ENCODE measurements at regions of chr15 and their contacts with region 1.

Region 1: GRCh38 chr15:59492389-59493377 is 54.7 kb downstream of the FAM81A start:
- DNase-seq: peak; percentile 12 to 63 (median 49)
- ATAC-seq: peak; percentile 85
- H3K4me3 ChIP-seq: no peak overlapping the region
- H3K4me3 Mint-ChIP-seq: peak overlapping the region in 1 of 10 donors; percentile 26
- H3K27ac ChIP-seq: no peak overlapping the region
- H3K27ac Mint-ChIP-seq: peak overlapping the region in 1 of 9 donors; percentile 2
- H3K4me1 ChIP-seq: no peaks in the 10 kb centered on the region
- H3K4me1 Mint-ChIP-seq: peaks cover 0 to 5% (median 4%) of the 10 kb centered on the region in 7 donors
- H3K27me3 ChIP-seq: no peaks in the 10 kb centered on the region
- H3K27me3 Mint-ChIP-seq: peaks cover 0 to 28% (median 3%) of the 10 kb centered on the region in 5 donors

Region 2: GRCh38 chr15:58269455-58270414 is 1222.9 kb before region 1 on chr15:
- CTCF ChIA-PET with region 1: interaction called, 4 read pairs
- POLR2A ChIA-PET with region 1: no interaction called
- intact Hi-C with region 1: loop called in 1 of 2 experiments (anchors 1 kb)
- DNase-seq: peak in 7 of 9 donors; percentile 13 to 56 (median 37)
- ATAC-seq: peak; percentile 81
- H3K4me3 ChIP-seq: no peak overlapping the region
- H3K4me3 Mint-ChIP-seq: no peak overlapping the region
- H3K27ac ChIP-seq: no peak overlapping the region
- H3K27ac Mint-ChIP-seq: peak overlapping the region in 5 of 9 donors; percentile 10 to 78 (median 52)
- H3K4me1 ChIP-seq: peaks cover 0 to 5% of the 10 kb centered on the region in 2 donors
- H3K4me1 Mint-ChIP-seq: peaks cover 6 to 14% (median 13%) of the 10 kb centered on the region in 7 donors
- H3K27me3 ChIP-seq: no peaks in the 10 kb centered on the region
- H3K27me3 Mint-ChIP-seq: peaks cover 0 to 6% (median 0%) of the 10 kb centered on the region in 5 donors

Region 3: DNA sequence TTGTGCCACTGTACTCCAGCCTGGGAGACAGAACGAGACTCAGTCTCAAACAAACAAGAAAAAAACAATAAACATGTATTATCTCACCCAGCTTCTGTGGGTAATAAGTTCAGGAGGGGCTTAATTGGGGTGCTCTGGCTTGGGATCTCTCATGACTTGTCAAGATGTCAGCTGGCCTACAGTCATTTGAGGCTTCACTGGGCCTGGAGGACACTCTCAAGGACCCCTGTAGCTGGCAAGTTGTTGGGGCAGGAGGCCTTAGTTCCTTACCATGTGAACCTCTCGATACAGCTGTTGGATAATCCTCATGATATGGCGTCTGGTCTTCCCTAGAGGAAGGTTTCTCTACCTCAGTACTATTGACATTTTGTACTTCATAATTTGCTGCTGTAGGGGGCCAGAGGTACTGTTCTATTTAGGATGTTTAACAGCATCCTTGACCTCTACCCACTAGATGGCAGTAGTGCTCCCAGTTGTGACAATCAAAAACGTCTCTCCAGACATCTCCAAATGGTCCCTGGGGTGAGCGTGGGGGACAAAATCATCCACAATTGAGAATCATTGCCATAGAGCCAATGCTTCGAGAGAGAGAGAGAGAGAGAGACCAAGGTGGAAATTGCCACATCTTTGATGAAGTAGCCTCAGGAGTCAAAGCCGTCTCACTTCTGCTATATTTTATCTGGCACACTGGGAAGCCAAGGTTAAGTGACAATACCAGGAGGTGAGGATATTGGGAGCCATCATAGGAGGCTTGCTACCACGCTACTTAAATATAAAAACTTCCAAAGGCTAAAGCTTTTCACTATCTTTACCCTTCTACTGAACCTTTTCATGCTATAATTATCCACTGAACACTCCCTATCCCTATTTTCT is 535.3 kb before region 1 on chr15:
- CTCF ChIA-PET with region 1: interaction called, 4 read pairs
- POLR2A ChIA-PET with region 1: no interaction called
- intact Hi-C with region 1: loop called (anchors 1 kb)
- DNase-seq: peak in 8 of 9 donors; percentile 37 to 69 (median 63)
- ATAC-seq: peak; percentile 99
- H3K4me3 ChIP-seq: no peak overlapping the region
- H3K4me3 Mint-ChIP-seq: peak overlapping the region in 1 of 10 donors; percentile 39
- H3K27ac ChIP-seq: no peak overlapping the region
- H3K27ac Mint-ChIP-seq: no peak overlapping the region
- H3K4me1 ChIP-seq: no peaks in the 10 kb centered on the region
- H3K4me1 Mint-ChIP-seq: peaks cover 0 to 14% (median 8%) of the 10 kb centered on the region in 7 donors
- H3K27me3 ChIP-seq: peaks cover 0 to 3% of the 10 kb centered on the region in 2 donors
- H3K27me3 Mint-ChIP-seq: peaks cover 0 to 11% (median 0%) of the 10 kb centered on the region in 5 donors

Region 4: DNA sequence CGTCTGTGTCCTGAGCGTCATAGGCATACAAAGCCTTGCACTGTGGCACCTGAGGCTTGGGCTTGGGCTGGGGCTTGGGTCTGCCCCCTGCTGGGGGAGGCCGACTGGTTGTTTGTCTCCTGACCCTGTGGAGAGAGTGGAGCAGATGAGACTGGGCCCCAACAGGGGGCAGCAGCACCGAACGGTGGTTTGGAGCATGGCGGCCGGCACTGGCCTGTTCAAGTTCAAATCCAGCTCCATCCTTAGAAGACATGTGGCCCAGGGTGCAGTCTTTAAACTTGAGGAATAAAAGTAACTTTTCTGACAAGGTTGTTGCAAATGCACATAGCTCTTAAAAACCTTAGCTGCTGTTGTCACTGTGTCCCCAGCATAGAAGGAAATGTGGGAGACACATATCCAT is 354.4 kb before region 1 on chr15:
- CTCF ChIA-PET with region 1: no interaction called
- POLR2A ChIA-PET with region 1: no interaction called
- intact Hi-C with region 1: loop called in 1 of 2 experiments (anchors 2 kb)
- DNase-seq: peak; percentile 23 to 48 (median 38)
- ATAC-seq: peak; percentile 92
- H3K4me3 ChIP-seq: no peak overlapping the region
- H3K4me3 Mint-ChIP-seq: no peak overlapping the region
- H3K27ac ChIP-seq: no peak overlapping the region
- H3K27ac Mint-ChIP-seq: peak overlapping the region in 2 of 9 donors; percentile 0 to 34
- H3K4me1 ChIP-seq: no peaks in the 10 kb centered on the region
- H3K4me1 Mint-ChIP-seq: peaks cover 0 to 46% (median 5%) of the 10 kb centered on the region in 7 donors
- H3K27me3 ChIP-seq: no peaks in the 10 kb centered on the region
- H3K27me3 Mint-ChIP-seq: no peaks in the 10 kb centered on the region

Region 5: DNA sequence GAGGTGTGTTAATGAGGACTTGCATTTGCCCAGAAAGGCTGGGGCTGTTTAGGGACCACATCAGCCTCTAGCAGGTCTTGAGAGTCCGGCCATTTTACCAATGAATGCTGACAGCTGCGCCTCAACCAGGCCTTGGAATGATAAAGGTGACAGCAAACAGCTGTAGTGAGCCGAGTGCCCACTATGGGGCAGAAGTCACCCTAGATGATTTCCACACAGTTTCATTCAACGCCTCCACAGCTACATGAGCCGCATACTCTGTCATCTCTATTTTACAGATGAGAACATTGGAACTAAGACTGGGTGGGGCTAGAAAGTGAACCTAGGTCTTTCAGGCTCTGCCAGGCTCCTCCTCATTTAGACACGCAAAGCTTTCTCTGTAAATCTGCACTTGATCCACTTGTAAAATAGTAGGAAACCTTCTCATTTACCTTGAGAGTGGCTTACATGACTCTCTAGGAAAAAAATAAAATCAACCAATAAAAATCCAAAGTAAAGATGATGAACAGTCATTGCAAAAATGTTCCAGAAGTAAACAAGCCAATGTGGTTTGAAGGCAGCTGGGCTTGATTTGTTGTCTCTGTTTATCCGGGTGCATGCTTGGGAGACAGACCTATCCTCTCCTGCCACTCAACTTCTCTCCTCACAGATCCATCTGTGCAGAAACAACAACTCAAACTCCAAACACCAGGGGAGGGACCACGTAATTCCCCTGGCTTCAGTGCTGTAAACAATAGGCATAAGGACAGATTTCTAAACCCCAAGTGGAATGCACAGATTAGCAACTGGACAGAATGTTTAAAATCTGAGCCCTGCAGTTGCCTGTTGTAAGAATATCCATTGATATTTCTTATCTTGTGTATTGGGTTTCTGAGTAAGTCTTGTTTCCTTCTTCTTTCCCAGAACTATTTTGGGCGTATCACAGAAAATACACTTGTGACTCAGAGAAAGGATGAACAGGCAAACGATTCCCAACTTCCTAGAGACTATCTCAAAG is 317.6 kb before region 1 on chr15:
- CTCF ChIA-PET with region 1: no interaction called
- POLR2A ChIA-PET with region 1: no interaction called
- intact Hi-C with region 1: loop called (anchors 1 kb)
- DNase-seq: peak in 4 of 9 donors; percentile 5 to 31 (median 14)
- ATAC-seq: peak; percentile 74
- H3K4me3 ChIP-seq: no peak overlapping the region
- H3K4me3 Mint-ChIP-seq: no peak overlapping the region
- H3K27ac ChIP-seq: no peak overlapping the region
- H3K27ac Mint-ChIP-seq: peak overlapping the region in 1 of 9 donors; percentile 29
- H3K4me1 ChIP-seq: no peaks in the 10 kb centered on the region
- H3K4me1 Mint-ChIP-seq: peaks cover 0 to 18% (median 0%) of the 10 kb centered on the region in 7 donors
- H3K27me3 ChIP-seq: no peaks in the 10 kb centered on the region
- H3K27me3 Mint-ChIP-seq: peaks cover 2 to 21% (median 15%) of the 10 kb centered on the region in 5 donors

Region 6: GRCh38 chr15:59522988-59523461 is 30.3 kb after region 1 on chr15:
- CTCF ChIA-PET with region 1: interaction called, 27 read pairs
- POLR2A ChIA-PET with region 1: no interaction called
- intact Hi-C with region 1: loop called in 1 of 2 experiments (anchors 1 kb)
- DNase-seq: peak in 8 of 9 donors; percentile 41 to 81 (median 74)
- ATAC-seq: peak; percentile 92
- H3K4me3 ChIP-seq: no peak overlapping the region
- H3K4me3 Mint-ChIP-seq: peak overlapping the region; percentile 26 to 82 (median 74)
- H3K27ac ChIP-seq: no peak overlapping the region
- H3K27ac Mint-ChIP-seq: peak overlapping the region; percentile 13 to 90 (median 81)
- H3K4me1 ChIP-seq: peaks cover 12 to 26% of the 10 kb centered on the region in 2 donors
- H3K4me1 Mint-ChIP-seq: peaks cover 15 to 58% (median 40%) of the 10 kb centered on the region in 7 donors
- H3K27me3 ChIP-seq: no peaks in the 10 kb centered on the region
- H3K27me3 Mint-ChIP-seq: peaks cover 0 to 26% (median 0%) of the 10 kb centered on the region in 5 donors